Activated CD4-positive, alpha-beta memory T cell treated with anti-CD3 and anti-CD28 coated beads for 36 hours (primary cell): ENCODE measurements at regions of chr15 and their contacts with region 1.

Region 1: GRCh38 chr15:79339564-79340314 is 28.8 kb downstream of the TMED3 start:
- DNase-seq: no peak
- H3K4me3 Mint-ChIP-seq: no peak overlapping the region
- H3K27ac Mint-ChIP-seq: no peak overlapping the region
- H3K4me1 Mint-ChIP-seq: no peaks in the 10 kb centered on the region
- H3K27me3 Mint-ChIP-seq: no peaks in the 10 kb centered on the region

Region 2: DNA sequence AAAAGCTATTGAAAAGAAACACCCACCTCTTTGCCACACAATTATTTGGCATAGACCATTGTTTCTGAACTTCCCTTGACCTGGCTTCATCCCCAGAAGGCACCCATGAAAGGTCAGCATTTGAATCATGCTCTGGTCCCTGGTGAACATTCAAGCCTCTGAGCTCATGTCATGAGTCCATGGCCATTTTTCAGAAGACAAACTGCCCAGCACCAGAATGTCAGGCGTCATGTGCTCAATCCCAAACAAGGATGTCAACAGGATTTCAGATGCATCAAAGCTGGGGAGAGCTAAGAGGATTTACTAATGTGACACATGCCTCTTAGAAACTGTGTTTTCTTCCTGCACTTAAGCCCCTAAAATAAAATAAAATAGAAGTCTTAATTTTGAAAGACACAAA is 12.5 kb after region 1 on chr15:
- CTCF ChIA-PET with region 1: interaction called, 11 read pairs
- POLR2A ChIA-PET with region 1: no interaction called
- intact Hi-C with region 1: no loop called
- DNase-seq: no peak
- H3K4me3 Mint-ChIP-seq: no peak overlapping the region
- H3K27ac Mint-ChIP-seq: no peak overlapping the region
- H3K4me1 Mint-ChIP-seq: no peaks in the 10 kb centered on the region
- H3K27me3 Mint-ChIP-seq: no peaks in the 10 kb centered on the region